ENCODE measurements at regions of chr2 and their contacts with region 1.

Region 1: GRCh38 chr2:176126929-176127773 is 2.4 kb upstream of the HOXD8 start:
- DNase-seq: peak; percentile 89
- ATAC-seq: no peak

Region 2: GRCh38 chr2:176187899-176188773 is 61.0 kb after region 1 on chr2 and contains the start of gene HOXD1:
- intact Hi-C with region 1: no loop called
- DNase-seq: no peak
- ATAC-seq: peak; percentile 58
- total RNA-seq, gene HOXD1: 1.9 TPM

Region 3: GRCh38 chr2:176638167-176639015 is 511.2 kb after region 1 on chr2:
- intact Hi-C with region 1: loop called (anchors 5 kb)
- DNase-seq: peak; percentile 85
- ATAC-seq: peak; percentile 83

Region 4: DNA sequence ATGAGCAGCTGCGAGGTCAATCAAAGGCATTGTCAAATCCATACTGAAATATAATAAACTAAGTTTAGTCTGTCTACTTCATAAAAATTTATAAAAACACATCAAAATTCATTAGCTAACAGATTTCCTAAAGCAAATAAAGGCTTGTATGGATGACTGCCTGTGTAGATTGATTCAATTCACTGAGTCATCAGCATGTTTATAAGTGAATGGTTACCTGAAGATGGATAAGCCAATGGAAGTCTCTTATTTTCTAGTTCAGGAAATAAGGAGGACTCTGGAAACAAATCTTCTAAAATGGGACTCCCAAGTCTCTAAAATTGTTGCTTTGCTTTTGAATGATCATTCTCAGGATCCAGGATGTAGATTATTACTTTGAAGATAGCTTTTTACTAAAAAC is 1028.5 kb after region 1 on chr2:
- intact Hi-C with region 1: loop called (anchors 10 kb)
- DNase-seq: no peak
- ATAC-seq: no peak